Posterior vena cava (tissue), 2 donors: ENCODE measurements at regions of chr3 and their contacts with region 1.

Region 1: GRCh38 chr3:32577581-32578556 is 7.2 kb upstream of the DYNC1LI1 start:
- DNase-seq: no peak

Region 2: DNA sequence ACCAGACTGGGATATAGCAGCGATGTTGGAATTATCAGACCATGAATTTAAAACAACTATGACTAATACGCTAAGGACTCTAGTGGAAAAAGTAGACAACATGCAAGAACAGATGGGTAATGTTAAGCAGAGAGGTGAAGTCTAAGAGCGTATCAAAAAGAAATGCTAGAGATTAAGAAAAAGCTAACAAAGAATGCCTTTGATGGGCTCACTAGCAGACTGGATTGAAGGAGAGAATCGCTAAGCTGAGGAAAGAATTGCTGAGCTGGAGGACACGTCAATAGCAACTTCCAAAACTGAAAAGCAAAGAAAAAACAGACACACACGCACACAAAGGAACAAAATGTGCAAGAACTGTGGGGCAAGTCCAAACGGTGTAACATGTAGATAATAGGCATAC is 55.2 kb before region 1 on chr3:
- intact Hi-C with region 1: no loop called
- DNase-seq: no peak

Region 3: GRCh38 chr3:32614956-32615355 is 37.1 kb after region 1 on chr3:
- intact Hi-C with region 1: loop called in 1 of 2 experiments (anchors 1 kb)
- DNase-seq: no peak

Region 4: GRCh38 chr3:34248352-34248751 is 1670.5 kb after region 1 on chr3:
- intact Hi-C with region 1: no loop called
- DNase-seq: no peak